Left colon (tissue), 2 donors: ENCODE measurements at regions of chr5 and their contacts with region 1.

Region 1: GRCh38 chr5:157718519-157718918 is 12.7 kb upstream of the THG1L start:
- DNase-seq: peak in 1 of 2 donors; percentile 23
- ATAC-seq: peak; percentile 95

Region 2: GRCh38 chr5:157328277-157328912 is 390.1 kb before region 1 on chr5:
- intact Hi-C with region 1: loop called in 1 of 2 experiments (anchors 5 kb)
- DNase-seq: peak; percentile 49 to 57
- ATAC-seq: peak; percentile 94

Region 3: DNA sequence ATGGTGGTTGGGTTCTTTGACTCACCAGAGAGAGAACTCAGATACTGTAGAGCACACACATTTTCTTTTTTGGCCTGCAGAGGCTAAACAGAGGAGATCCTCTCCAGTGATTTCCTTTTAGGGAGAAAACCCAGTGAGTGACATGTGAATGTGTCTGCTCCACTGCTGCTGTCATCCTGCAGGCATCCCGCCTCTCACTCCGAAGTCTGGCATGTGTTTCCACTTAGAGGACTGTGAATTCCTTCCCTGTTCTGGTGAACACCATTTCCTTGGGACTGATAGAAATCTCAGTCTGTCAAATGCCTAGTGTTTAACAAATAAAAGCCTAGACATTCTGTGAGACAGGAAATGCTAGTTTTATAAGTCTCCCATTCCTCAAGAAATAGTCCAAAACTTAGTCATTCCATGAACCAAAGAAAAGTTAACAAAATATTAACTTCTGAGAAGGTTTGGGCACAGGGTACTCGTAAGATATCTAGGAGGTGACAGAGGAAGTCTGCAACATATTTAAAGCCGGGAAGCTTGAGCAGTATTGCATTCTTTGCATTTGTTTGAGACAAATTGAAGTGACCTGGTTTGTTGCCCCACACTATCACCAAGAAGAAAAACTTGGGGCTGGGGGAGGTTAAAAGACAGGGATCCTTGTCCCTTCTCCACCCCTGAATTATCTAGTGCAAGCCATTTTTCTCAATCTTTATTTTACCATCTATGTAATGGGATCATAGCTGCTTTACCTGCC is 333.4 kb before region 1 on chr5:
- intact Hi-C with region 1: no loop called
- DNase-seq: peak in 1 of 2 donors; percentile 57
- ATAC-seq: no peak